Lower leg skin (tissue), 4 donors: ENCODE measurements at regions of chr11 and their contacts with region 1.

Region 1: DNA sequence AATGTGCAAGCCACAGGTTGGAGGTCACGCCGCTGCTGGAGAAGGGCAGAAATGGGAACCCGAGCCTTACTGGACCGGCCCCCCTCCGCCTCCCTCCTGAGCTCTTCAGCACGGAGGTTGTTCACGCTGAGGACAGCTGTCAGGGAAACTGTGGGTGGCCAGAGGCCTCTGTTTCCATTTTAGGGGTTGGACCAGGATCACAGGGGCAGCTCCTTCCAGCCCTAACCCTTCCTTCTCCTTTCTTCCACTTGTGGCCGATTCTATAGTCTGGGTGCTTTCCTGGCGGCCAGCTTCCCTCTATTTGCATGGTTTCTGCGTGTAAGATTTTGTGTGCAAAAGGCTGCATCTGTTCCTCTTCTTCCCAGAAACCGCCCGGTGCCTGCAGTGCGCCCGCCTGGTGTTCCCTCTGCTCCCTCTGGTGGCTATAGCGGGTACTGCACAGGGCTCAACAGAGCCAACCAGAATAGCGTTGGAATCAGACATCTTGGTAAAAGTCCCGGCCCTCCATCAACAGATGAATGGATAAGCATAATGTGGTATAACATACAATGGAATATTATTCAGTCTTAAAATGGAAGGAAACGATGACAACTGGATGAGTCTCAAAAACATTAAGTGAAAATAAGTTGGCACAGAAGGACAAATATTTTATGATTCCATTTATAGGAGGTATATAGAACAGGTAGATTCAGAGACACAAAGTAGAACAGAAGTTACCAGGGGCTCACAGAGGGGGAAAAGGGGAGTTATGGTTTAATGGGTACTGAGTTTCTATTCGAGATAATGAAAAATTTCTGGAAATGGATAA is 8.4 kb upstream of the SLC22A8 start:
- DNase-seq: peak; percentile 89 to 98
- H3K4me3 ChIP-seq: no peak overlapping the region
- CTCF ChIP-seq: peak; percentile 48 to 99 (median 85)
- POLR2A ChIP-seq: no peak

Region 2: DNA sequence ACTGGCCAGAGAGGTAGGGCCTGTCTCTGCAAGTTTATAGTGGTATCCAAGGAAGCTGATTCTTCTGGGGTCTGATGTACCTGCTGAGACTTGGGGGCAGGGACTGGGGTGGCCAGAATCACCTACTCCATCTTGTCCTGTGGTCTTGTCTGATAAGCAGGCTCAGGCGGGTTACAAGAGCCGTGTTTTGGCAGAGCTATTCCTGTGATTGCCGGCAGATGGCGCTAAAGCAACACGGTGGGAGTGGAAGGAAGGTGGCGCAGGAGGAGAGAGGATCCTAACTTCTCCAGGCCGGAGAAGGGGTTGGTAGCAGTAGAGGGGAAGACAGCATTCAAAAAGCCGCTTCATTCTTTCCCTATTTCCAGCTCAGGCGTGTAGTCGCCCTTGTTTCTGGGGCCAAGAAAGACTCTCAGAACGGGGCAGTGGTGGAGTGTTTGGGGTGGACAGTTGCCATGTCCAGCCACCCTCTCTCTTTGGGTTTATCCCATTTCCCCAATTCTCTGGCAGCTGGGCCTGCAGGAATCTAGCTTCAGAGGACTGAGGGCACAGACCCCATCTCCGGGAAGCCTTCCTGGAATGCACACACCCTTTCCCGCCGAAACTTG is 118.0 kb before region 1 on chr11:
- intact Hi-C with region 1: loop called (anchors 2 kb)
- DNase-seq: peak; percentile 80 to 97
- H3K4me3 ChIP-seq: no peak overlapping the region
- CTCF ChIP-seq: peak in 1 of 3 donors; percentile 92
- POLR2A ChIP-seq: no peak